ENCODE measurements at regions of chr19 and their contacts with region 1.

Region 1: GRCh38 chr19:33740811-33741396 is 55.8 kb upstream of the KCTD15 start:
- DNase-seq: peak in 3 of 6 donors; percentile 12 to 42 (median 23)
- ATAC-seq: peak in 2 of 4 donors; percentile 62 to 81
- H3K4me3 ChIP-seq: no peak overlapping the region
- H3K27ac ChIP-seq: no peak overlapping the region
- H3K4me1 ChIP-seq: no peaks in the 10 kb centered on the region
- H3K27me3 ChIP-seq: no peaks in the 10 kb centered on the region
- CTCF ChIP-seq: no peak

Region 2: DNA sequence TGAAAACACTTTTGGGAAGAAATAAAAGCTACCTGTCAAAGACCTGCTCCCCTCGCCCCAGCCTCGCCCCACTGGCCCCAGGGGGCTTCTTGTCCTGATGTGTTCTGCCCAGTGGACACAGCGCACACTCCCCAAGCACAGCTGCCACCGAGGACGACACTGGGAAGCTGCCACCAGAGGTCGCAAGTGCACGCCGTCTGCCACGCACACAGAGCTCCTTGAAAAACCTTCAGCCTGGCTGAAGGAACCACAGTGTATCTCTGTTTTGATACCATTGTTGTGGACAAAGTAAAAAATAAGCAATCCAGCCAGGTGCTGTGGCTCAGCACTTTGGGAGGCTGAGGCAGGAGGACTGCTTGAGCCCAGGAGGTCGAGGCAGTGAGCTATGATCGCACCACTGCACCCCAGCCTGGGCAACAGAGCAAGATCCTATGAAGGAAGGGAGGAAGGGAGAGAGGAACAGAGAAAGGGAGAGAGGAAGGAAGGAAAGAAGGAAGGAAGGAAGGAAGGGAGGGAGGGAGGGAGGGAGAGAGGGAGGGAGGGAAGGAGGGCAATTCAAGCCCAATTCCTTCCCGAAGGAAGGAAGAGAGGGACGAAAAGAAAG is 310.1 kb before region 1 on chr19:
- intact Hi-C with region 1: loop called in 1 of 3 experiments (anchors 10 kb)
- DNase-seq: peak; percentile 33 to 89 (median 70)
- ATAC-seq: peak; percentile 67 to 93 (median 90)
- H3K4me3 ChIP-seq: no peak overlapping the region
- H3K27ac ChIP-seq: no peak overlapping the region
- H3K4me1 ChIP-seq: no peaks in the 10 kb centered on the region
- H3K27me3 ChIP-seq: no peaks in the 10 kb centered on the region
- CTCF ChIP-seq: peak; percentile 54 to 70 (median 63)

Region 3: DNA sequence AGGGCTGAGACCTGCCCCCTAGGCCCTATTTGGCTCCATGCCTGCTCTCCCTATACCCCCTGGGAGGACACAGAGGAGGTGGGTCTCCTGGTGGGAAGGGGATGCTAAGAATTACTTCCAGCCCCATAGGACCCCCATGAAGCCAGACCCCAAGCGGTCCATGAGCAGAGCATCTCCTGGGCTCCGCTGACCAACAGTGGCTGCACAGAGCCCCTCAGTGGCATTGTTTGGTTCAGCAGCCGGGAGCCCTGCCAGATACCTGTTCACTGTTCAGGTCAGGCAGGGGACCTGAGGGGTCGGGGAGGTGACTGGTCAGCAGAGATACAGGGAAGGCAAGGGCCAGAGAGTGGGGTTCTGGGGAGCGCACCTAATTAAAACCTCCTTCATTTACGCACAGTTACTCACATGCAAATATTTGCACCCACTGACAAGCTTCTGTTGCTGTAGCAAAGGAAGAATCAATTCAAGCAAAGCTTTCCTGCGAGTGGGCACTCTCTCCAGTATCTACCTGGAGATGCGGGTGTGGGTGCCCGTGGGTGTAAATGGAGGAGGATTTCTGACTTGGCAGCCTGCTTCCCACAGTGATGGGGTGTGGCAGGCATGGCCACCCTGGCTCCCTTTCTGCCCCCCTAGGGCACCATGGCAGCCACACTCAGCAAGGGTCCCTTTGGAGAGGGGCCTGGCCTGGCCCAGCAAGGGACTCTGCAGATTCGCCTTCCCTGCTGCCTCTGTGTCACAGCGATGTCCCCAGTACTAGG is 35.6 kb before region 1 on chr19:
- intact Hi-C with region 1: no loop called
- DNase-seq: peak in 1 of 6 donors; percentile 42
- ATAC-seq: no peak
- H3K4me3 ChIP-seq: no peak overlapping the region
- H3K27ac ChIP-seq: no peak overlapping the region
- H3K4me1 ChIP-seq: no peaks in the 10 kb centered on the region
- H3K27me3 ChIP-seq: no peaks in the 10 kb centered on the region
- CTCF ChIP-seq: no peak